HepG2 (cell line): ENCODE measurements at regions of chr17 and their contacts with region 1.

Region 1: GRCh38 chr17:39636927-39637736 is at the start of gene STARD3:
- DNase-seq: peak; percentile 83
- ATAC-seq: peak; percentile 93
- H3K4me3 ChIP-seq: peak within 1 kb of the TSS; percentile 87 to 94 (median 88)
- H3K27ac ChIP-seq: peak within 1 kb of the TSS; percentile 80
- H3K4me1 ChIP-seq: peaks cover 77% of the 10 kb centered on the region
- H3K27me3 ChIP-seq: peaks cover 3 to 15% of the 10 kb centered on the region in 2 experiments; a peak in 3 of 5 replicates
- CTCF ChIP-seq: peak; percentile 66
- EP300 ChIP-seq: no peak
- POLR2A ChIP-seq: peak; percentile 63 to 84
- RAD21 ChIP-seq: peak; percentile 60
- total RNA-seq, gene STARD3: 17.2 and 34.6 TPM in 2 replicates

Region 2: DNA sequence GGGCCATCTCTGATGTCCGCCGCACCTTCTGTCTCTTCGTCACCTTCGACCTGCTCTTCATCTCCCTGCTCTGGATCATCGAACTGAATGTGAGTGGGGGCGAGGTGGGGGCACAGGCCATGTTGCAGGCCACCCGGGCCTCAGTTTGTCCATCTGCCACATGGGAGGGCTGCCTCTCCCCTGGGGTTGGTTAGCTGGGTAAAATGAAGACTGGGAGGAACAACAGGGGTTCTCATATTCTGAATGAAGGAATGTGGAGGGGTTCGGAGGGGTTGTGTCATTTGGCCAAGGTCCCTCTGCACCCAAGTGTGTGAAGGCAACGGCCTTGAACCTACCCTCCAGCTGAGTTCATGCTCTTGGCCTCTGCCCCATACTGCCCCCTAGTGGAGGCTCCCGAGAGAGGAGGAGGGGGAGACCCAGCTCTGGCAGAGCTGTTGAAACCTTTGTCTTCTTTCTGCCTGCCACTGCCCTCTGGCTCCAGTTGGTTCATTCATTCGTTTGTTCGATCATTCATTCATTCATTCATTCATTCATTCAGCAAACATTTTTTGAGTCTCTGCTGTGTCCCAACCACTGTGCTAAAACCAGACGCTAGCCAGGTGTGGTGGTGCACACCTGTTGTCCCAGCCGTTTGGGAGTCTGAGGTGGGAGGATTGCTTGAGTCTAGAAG is 16.7 kb after region 1 on chr17:
- CTCF ChIA-PET with region 1: interaction called, 12 read pairs
- POLR2A ChIA-PET with region 1: interaction called, 9 read pairs
- in situ Hi-C with region 1: no loop called
- intact Hi-C with region 1: no loop called
- DNase-seq: peak; percentile 79
- ATAC-seq: peak; percentile 65
- H3K4me3 ChIP-seq: peak overlapping the region in 1 of 3 experiments; percentile 54; a peak in 1 of 6 replicates
- H3K27ac ChIP-seq: peak overlapping the region; percentile 48
- H3K4me1 ChIP-seq: peaks cover 31% of the 10 kb centered on the region
- H3K27me3 ChIP-seq: no peaks in the 10 kb centered on the region
- CTCF ChIP-seq: peak; percentile 93
- EP300 ChIP-seq: peak in 1 of 2 experiments; percentile 53; a peak in 1 of 4 replicates
- POLR2A ChIP-seq: no peak
- RAD21 ChIP-seq: peak; percentile 76